ENCODE measurements at regions of chr14 and their contacts with region 1.

Region 1: DNA sequence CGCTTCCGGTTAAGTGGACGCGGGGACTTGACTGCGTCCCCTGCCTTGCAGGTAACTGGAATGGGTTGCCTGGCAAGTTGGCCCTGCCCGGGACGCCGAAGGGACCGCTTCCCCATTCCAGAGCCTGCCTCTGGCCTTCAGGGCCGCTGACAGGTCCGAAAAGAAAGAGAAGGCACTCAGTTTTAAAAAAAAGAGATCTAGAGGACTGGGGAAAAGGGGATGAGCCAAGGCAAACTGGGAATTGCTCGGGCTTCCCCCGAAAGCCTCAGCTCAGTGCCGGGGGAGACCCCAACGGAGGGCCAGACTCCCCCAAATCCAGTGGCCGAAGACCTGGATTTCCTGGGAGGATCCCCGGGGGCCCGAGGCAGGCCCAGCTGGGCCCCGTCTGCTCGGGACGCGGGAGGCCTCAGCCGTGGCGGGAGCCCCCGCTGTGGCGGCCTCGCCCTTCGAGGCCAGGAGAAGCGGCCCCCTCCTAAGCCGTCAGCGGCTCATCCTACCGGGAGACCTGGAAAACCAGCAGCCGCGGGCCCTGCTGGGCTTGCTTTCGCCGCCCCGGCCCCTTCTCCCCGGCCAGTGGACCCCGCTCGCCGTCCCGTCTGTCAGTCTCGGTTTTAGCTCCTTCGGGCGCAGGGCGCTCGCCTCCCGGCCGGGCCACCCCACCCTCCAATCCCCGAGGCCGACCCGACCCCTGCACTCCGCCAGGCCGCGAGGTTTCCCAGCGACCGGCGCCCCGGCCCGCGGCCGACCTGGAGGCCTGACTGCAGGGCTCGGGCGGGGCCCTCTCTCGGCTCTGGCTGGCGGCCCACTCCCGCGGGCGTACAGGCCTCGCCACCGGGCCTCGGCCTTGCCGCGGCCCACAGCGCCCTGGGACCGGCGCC is 12.5 kb downstream of the OTX2 start:
- DNase-seq: no peak
- H3K4me3 Mint-ChIP-seq: no peak overlapping the region
- H3K27ac Mint-ChIP-seq: no peak overlapping the region
- H3K4me1 Mint-ChIP-seq: peaks cover 2% of the 10 kb centered on the region
- H3K27me3 Mint-ChIP-seq: peaks cover 75% of the 10 kb centered on the region

Region 2: DNA sequence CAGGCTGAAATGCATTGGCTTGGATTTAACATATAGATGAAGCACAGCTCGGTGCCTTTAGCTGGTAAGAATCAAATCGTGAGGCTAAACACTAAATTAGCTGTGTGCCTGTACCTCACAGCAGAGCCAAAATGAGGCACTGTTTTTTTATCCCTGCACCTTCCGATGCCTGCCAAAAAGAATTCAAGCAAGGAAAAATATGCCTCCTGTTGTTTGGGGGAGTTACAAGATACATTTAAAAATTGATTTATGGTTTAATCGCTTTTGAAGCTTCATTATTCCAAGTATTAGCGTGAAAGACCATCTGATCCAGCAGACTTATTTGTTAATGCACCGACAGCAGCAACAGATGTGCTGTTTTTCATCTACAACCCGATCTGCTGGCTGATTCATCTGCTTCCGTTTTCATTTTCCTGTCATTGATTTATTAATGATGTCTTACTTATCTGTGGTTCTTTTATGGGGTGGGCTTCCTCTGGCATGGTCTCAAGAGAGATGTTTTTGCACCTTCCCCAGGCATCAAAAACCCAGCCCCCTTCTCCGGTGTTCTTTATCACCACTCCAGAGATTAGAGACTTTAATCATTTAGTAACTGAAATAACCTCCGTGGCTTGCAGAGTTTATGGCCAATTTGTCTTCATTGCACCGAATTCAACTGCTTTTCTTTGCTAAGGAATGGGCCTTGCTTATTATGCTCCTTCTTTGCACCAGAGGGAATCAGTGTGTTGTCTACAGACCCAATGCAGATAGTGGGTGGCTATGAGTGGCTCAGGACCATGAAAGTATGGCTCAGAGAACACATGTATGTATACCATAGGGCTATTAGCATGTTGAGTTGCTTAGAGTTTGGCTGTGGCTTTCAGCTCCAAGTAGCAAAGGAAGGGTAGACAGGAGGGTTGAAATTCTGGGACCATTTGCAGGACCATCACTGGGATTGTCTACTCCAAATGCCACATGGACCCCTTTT is 385.1 kb before region 1 on chr14:
- intact Hi-C with region 1: no loop called
- DNase-seq: no peak
- H3K4me3 Mint-ChIP-seq: peak overlapping the region; percentile 27
- H3K27ac Mint-ChIP-seq: no peak overlapping the region
- H3K4me1 Mint-ChIP-seq: peaks cover 3% of the 10 kb centered on the region
- H3K27me3 Mint-ChIP-seq: peaks cover 11% of the 10 kb centered on the region

Region 3: DNA sequence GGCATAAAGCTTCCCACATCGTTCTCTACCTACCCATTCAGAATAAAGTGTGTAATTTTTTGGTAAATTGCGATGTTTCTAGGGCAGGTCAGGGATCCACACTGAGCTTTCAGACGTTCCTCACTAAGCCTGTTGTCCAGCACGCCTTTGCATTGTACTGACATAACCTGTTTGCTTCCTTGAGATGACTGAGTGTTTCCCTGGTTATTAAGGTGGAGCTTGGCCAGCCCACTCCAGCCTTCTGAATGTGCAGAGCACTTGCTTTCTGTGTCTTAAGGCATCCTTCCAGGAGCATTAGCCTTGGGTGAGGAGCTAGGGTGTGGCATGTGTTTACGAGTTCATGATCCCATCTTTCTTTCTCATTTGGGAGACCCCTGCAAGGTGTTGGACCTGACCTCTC is 121.8 kb before region 1 on chr14:
- intact Hi-C with region 1: no loop called
- DNase-seq: no peak
- H3K4me3 Mint-ChIP-seq: no peak overlapping the region
- H3K27ac Mint-ChIP-seq: no peak overlapping the region
- H3K4me1 Mint-ChIP-seq: no peaks in the 10 kb centered on the region
- H3K27me3 Mint-ChIP-seq: no peaks in the 10 kb centered on the region

Region 4: DNA sequence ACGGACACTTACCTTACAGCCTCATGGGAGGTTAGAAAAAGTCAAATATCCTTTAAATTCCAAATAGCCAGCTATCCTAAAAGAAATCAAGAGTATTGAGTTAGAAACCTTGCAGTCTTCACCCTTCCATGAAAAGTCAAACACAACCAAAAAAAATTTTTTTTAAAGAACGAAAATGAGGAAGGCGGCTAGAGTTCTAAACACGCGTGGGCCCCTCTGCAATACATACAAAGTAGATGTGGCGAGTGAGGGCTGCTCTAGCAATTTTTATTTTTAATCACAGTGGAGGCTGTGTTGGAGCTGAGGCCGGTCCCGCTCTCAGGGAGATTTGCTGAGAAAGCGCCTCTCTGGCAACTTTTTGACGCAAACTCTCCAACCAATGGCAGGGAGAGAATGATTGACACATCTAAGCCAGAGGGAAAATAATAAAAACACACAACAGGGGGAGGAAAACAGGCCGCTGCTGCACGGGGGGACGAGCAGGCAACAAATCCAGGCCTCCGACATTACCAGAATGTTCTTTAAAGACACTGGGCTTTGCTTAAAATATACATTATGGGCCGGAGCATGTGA is 12.4 kb after region 1 on chr14 and contains the start of gene OTX2:
- intact Hi-C with region 1: loop called (anchors 2 kb)
- DNase-seq: no peak
- H3K4me3 Mint-ChIP-seq: peak within 1 kb of the TSS; percentile 10
- H3K27ac Mint-ChIP-seq: peak within 1 kb of the TSS; percentile 85
- H3K4me1 Mint-ChIP-seq: peaks cover 9% of the 10 kb centered on the region
- H3K27me3 Mint-ChIP-seq: peaks cover 78% of the 10 kb centered on the region
- total RNA-seq, gene OTX2: not detected in 2 replicates

Region 5: DNA sequence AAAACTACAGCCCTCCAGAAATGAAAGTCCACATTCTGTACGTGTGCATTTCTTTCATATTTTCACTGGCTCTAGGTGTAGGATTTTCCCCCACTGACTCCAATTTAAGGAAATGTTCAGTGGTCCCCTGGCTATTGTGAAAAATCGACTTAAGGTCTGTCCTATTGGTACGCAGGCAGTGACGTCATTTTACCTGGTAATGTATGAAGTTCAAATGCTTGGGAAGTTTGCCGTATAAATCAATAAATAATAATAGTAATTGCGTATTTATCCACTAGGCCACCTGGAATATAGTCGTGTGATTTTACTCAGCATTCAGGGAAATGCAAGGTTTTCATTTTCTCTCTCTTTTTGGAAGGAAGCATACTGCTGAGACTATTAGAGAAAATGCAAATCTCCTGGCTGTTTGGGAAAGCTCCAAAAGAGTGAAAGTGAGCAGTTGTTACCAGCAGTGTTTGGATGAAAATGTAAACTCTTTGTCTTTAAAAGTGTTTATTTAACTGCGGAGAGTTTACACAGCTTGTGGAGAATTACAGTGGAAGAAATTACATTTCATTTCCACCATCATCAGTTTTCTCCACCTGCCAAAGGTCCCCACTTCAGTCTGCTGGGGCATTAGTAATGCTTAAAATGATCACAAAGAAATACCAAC is 363.9 kb after region 1 on chr14:
- intact Hi-C with region 1: no loop called
- DNase-seq: no peak
- H3K4me3 Mint-ChIP-seq: no peak overlapping the region
- H3K27ac Mint-ChIP-seq: no peak overlapping the region
- H3K4me1 Mint-ChIP-seq: no peaks in the 10 kb centered on the region
- H3K27me3 Mint-ChIP-seq: peaks cover 12% of the 10 kb centered on the region